ACHN (cell line): ENCODE measurements at regions of chr10 and their contacts with region 1.

Region 1: DNA sequence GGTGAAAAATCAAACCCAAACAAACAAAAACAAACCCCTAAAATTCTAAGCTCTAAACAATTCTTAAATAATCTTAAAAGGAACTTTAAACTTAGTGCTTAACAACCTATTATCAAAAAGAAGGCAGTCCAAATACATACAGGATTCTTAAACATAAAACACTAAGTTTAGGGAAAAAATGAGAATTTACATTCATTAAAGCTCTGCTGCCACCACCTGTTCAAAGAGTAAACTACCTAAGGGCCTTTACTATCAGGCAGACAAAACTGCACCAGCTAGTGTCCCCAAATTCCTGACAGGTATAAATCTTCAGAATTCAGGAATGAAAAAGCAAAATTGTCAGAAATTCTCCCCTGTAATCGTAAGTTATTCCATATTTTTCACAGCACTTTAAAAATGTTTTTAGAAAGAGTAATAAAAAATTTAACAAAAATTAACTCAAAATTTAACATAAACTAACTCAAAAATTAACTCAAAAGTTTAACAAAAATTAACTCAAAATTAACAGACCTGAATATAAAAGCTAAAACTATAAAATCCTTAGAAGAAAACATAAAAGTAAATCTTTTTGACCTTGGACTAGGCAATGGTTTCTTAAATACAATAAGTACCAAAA is 55.1 kb downstream of the PDZD8 start:
- DNase-seq: peak; percentile 53

Region 2: DNA sequence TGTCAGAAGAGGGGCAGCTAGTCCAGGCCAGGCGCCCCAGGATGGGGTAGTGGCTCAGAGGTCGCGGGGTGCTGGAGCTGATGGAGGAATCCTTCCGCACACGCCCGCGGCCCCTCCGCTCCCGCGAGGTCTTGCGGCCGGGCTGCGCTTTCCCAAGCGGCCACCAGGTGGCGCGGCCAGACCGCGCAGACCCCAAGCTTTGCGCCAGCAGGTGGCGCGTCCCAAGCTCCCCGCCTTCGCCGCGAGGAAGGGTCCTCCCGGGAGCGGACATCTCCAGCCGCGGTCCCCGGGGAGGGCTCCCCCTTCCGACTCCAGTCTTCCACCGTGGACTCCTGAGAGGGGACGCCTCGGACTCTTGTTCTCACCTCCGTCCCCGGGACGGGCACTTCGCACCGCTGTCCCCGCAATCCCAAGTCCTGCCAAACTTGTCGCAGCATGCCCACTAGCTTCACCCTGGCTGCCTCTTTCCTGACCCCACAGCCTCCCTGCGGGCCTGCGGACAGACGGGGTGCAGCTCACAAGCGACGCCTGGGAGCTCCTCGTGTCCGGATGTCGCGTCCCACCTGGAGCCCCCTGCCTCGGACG is 103.5 kb before region 1 on chr10:
- in situ Hi-C with region 1: loop called (anchors 25 kb)
- DNase-seq: peak; percentile 78

Region 3: DNA sequence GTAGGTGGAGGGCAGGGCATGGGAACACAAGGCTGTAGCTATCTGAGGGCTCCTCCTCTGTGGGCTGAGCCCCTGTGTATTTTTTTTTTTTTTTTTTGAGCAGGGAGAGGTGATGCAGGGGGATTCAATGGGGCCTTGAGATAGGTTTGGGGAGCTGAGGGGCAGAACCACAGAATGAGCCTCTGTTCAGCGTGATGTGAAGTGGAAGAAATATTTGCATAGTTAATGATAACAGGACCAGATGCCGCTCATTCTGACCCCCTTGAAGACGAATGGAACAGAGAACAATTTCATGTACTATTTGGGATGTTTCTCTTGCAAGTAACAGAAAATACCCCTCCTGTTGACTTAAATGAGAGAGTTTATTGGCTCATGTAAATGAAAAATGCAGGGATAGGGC is 152.7 kb after region 1 on chr10:
- in situ Hi-C with region 1: no loop called
- DNase-seq: no peak